ENCODE measurements at regions of chr1 and their contacts with region 1.

Region 1: DNA sequence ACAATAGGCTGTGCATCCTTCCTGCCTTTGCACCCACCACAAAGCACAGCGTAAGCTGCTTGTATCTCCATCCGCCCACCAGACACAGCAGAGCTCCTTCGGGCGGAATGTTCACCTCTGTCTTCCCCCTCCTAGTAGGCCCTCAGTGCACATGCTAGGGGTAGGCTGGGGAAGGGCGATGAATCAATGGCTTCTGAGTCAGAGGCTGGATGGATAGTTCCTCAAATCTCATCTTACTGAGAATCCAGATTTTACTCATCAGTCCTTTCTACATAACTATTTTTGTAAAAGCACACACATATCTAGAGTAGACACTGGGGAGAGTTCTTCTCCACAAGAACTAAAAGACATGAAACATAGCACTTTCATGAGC is 73.8 kb downstream of the BCAR3 start:
- DNase-seq: peak; percentile 78
- H3K4me3 Mint-ChIP-seq: no peak overlapping the region
- H3K27ac Mint-ChIP-seq: no peak overlapping the region
- H3K4me1 Mint-ChIP-seq: peaks cover 25% of the 10 kb centered on the region
- H3K27me3 Mint-ChIP-seq: peaks cover 21% of the 10 kb centered on the region

Region 2: GRCh38 chr1:93528412-93528811 is 79.4 kb before region 1 on chr1:
- CTCF ChIA-PET with region 1: no interaction called
- intact Hi-C with region 1: no loop called
- DNase-seq: no peak
- H3K4me3 Mint-ChIP-seq: no peak overlapping the region
- H3K27ac Mint-ChIP-seq: no peak overlapping the region
- H3K4me1 Mint-ChIP-seq: no peaks in the 10 kb centered on the region
- H3K27me3 Mint-ChIP-seq: no peaks in the 10 kb centered on the region

Region 3: GRCh38 chr1:93740601-93741031 is 132.8 kb after region 1 on chr1:
- CTCF ChIA-PET with region 1: interaction called, 5 read pairs
- intact Hi-C with region 1: loop called (anchors 5 kb)
- DNase-seq: no peak
- H3K4me3 Mint-ChIP-seq: no peak overlapping the region
- H3K27ac Mint-ChIP-seq: no peak overlapping the region
- H3K4me1 Mint-ChIP-seq: peaks cover 18% of the 10 kb centered on the region
- H3K27me3 Mint-ChIP-seq: no peaks in the 10 kb centered on the region

Measured in activated naive CD4-positive, alpha-beta T cell treated with anti-CD3 and anti-CD28 coated beads for 36 hours (primary cell).